ENCODE measurements at regions of chr3 and their contacts with region 1.

Region 1: DNA sequence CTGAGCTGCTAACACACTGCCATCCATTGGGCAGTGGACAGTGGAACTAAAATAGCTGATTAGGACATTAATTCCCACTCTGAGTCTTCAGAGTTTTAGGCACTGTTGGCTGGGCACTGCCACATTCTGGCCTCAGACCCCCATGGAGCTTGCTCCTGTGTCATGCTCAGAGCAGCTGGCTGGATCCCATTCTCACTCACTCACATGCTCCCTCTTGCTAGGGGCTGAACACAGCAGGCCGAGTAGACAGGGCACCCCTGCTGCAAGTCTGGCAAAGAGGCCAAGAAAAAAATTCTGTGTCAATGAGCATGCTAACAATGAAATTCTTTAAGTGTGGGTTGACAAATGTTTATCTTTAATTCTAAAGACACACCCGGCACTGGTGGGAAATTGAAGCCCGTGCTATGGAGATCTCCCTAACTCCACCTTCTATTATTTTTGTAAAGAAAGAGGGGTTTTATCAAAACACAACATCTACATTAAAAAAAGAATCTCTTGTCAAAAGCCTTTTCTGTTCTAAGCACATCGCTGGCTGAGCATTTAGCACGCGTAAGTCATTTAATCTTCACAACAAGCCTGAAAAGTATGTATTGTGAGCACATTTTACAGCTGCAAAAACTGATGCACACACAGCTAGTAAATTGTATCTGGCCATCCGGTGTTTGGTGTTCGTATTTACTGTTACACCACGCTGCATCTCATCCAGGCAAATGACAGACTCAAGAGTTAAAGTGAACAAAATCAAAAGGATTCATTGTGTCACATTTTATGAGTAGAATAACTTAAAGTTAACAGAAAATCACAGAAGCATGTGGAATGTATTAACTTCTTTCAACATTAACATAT is 362.1 kb downstream of the PLOD2 start:
- DNase-seq: no peak
- ATAC-seq: no peak
- H3K4me3 ChIP-seq: no peak overlapping the region
- H3K4me3 Mint-ChIP-seq: no peak overlapping the region
- H3K27ac ChIP-seq: no peak overlapping the region
- H3K27ac Mint-ChIP-seq: no peak overlapping the region
- H3K4me1 ChIP-seq: no peaks in the 10 kb centered on the region
- H3K4me1 Mint-ChIP-seq: no peaks in the 10 kb centered on the region
- H3K27me3 ChIP-seq: no peaks in the 10 kb centered on the region
- H3K27me3 Mint-ChIP-seq: no peaks in the 10 kb centered on the region
- CTCF ChIP-seq: no peak

Region 2: GRCh38 chr3:144879701-144880100 is 919.2 kb before region 1 on chr3:
- CTCF ChIA-PET with region 1: no interaction called
- POLR2A ChIA-PET with region 1: no interaction called
- intact Hi-C with region 1: loop called in 1 of 2 experiments (anchors 5 kb)
- DNase-seq: no peak
- ATAC-seq: no peak
- H3K4me3 ChIP-seq: no peak overlapping the region
- H3K4me3 Mint-ChIP-seq: no peak overlapping the region
- H3K27ac ChIP-seq: no peak overlapping the region
- H3K27ac Mint-ChIP-seq: no peak overlapping the region
- H3K4me1 ChIP-seq: no peaks in the 10 kb centered on the region
- H3K4me1 Mint-ChIP-seq: no peaks in the 10 kb centered on the region
- H3K27me3 ChIP-seq: no peaks in the 10 kb centered on the region
- H3K27me3 Mint-ChIP-seq: no peaks in the 10 kb centered on the region
- CTCF ChIP-seq: no peak

Measured in CD4-positive, alpha-beta T cell (primary cell).